Natural killer cell (primary cell): ENCODE measurements at regions of chr11 and their contacts with region 1.

Region 1: DNA sequence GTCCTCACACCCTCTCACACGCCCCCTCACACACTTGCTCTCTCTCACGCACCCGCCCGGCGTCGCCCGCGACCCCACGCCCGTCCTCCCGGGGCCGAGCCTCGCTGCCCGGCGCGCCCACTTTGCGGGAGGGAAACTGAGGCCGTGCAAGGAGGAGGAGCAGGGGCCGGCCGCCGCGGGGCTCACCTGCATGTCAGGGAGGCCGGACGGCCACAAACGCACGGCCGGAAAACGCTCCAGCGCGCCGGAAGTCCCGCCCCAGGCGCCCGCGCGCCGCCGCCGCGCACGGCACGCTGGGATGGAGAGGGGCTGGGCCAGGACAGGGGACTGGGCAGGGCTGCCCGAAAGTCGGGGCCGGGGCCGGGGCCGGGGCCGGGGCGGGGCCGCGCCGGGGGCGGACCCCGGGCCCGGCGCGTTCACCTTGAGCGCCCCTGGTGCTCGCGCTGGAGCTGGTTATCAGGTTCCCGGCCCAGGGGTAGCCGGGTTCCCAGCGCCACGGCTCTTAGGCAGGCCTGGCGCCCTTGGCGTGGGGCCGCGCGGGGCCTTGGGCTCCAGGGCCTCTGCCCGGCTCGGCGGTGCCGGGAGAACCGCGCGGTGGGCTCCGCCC is at the start of gene CHID1:
- DNase-seq: peak; percentile 80 to 86
- ATAC-seq: peak; percentile 93 to 96 (median 95)
- H3K4me3 ChIP-seq: peak within 1 kb of the TSS; percentile 45
- H3K4me3 Mint-ChIP-seq: peak within 1 kb of the TSS; percentile 96
- H3K27ac ChIP-seq: peak within 1 kb of the TSS; percentile 13
- H3K27ac Mint-ChIP-seq: peak within 1 kb of the TSS; percentile 63 to 85
- H3K4me1 ChIP-seq: peaks cover 26% of the 10 kb centered on the region
- H3K4me1 Mint-ChIP-seq: peaks cover 11 to 13% of the 10 kb centered on the region in 2 donors
- H3K27me3 ChIP-seq: no peaks in the 10 kb centered on the region
- H3K27me3 Mint-ChIP-seq: no peaks in the 10 kb centered on the region
- CTCF ChIP-seq: no peak
- total RNA-seq, gene CHID1: 32.6 to 40.3 (median 33.2) TPM

Region 2: GRCh38 chr11:355581-356458 is 554.9 kb before region 1 on chr11:
- intact Hi-C with region 1: no loop called
- DNase-seq: peak; percentile 64 to 93
- ATAC-seq: peak; percentile 19 to 61 (median 58)
- H3K4me3 ChIP-seq: peak overlapping the region; percentile 11
- H3K4me3 Mint-ChIP-seq: peak overlapping the region; percentile 57
- H3K27ac ChIP-seq: peak overlapping the region; percentile 83
- H3K27ac Mint-ChIP-seq: peak overlapping the region; percentile 78
- H3K4me1 ChIP-seq: peaks cover 74% of the 10 kb centered on the region
- H3K4me1 Mint-ChIP-seq: peaks cover 41 to 57% of the 10 kb centered on the region in 2 donors
- H3K27me3 ChIP-seq: no peaks in the 10 kb centered on the region
- H3K27me3 Mint-ChIP-seq: no peaks in the 10 kb centered on the region
- CTCF ChIP-seq: no peak

Region 3: DNA sequence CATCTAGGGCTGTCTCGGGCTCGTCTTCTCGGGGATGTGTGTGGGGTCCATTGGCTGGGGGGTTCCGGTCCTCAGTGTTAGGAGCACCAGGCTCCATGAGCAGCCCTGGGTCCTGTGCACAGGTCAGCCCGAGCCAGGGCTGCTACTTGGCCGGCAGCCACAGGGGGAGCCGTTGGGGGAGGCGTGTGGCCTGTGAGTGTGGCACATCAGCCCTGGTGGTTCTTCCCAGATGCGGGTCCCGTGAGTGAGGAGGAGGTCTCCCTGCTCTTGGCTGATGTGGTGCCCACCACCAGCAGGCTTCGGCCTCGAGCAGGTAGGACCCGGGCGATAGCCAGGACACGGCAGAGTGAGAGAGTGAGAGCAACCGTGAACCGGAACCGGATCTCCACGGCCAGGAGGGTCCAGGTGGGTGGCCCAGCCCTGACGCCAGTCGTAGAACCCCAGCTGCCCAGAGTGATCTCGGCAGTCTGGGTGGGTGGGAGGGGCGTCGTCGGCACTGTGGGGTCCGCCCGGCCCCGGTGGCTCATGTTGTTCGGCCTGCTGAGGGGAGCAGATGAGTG is 313.4 kb before region 1 on chr11:
- intact Hi-C with region 1: no loop called
- DNase-seq: no peak
- ATAC-seq: peak in 2 of 3 donors; percentile 33 to 36
- H3K4me3 ChIP-seq: no peak overlapping the region
- H3K4me3 Mint-ChIP-seq: no peak overlapping the region
- H3K27ac ChIP-seq: no peak overlapping the region
- H3K27ac Mint-ChIP-seq: peak overlapping the region in 1 of 2 donors; percentile 35
- H3K4me1 ChIP-seq: peaks cover 13% of the 10 kb centered on the region
- H3K4me1 Mint-ChIP-seq: peaks cover 10 to 11% of the 10 kb centered on the region in 2 donors
- H3K27me3 ChIP-seq: no peaks in the 10 kb centered on the region
- H3K27me3 Mint-ChIP-seq: no peaks in the 10 kb centered on the region
- CTCF ChIP-seq: no peak

Region 4: DNA sequence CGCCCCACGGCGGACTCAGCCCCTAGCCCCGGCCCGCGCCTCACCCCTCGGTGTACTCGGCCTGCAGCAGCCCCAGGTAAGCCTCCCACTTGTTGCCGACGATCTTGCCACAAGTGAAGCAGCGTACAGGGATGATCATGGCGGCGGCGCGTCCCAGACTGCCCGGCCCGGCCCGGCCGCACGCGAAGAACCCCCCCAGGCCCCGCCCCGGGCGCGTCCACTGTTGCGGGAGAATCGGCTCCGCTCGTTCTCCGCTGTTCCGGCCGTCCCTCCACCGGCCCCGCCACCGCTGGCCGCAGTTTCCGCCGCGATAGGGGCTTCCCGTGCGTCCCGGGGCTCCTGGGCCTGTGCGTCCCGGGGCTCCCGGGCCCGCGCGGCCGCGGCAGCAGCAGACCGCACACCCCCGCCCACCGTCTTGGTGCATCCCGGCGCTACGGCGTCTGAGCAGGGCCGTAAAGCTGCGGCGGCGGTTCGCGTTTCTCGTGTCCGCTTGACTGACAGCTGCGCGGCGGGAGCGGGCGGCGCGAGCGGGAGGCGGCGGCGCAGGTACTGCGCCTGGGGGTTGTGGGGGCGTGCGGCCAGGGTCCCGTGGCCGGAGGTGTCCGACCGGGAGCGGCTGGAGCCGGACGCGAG is 68.2 kb before region 1 on chr11 and contains the starts of genes POLR2L and TSPAN4:
- intact Hi-C with region 1: loop called (anchors 10 kb)
- DNase-seq: peak; percentile 88 to 94
- ATAC-seq: peak; percentile 83 to 89 (median 83)
- H3K4me3 ChIP-seq: peak within 1 kb of the TSS; percentile 70
- H3K4me3 Mint-ChIP-seq: peak within 1 kb of the TSS; percentile 86
- H3K27ac ChIP-seq: peak within 1 kb of the TSS; percentile 58
- H3K27ac Mint-ChIP-seq: peak within 1 kb of the TSS in 1 of 2 donors; percentile 75
- H3K4me1 ChIP-seq: peaks cover 66% of the 10 kb centered on the region
- H3K4me1 Mint-ChIP-seq: peaks cover 4 to 39% of the 10 kb centered on the region in 2 donors
- H3K27me3 ChIP-seq: no peaks in the 10 kb centered on the region
- H3K27me3 Mint-ChIP-seq: no peaks in the 10 kb centered on the region
- CTCF ChIP-seq: no peak
- total RNA-seq, gene POLR2L: 48.2 to 63.8 (median 61.2) TPM
- total RNA-seq, gene TSPAN4: 11.2 to 18.6 (median 14.6) TPM

Region 5: DNA sequence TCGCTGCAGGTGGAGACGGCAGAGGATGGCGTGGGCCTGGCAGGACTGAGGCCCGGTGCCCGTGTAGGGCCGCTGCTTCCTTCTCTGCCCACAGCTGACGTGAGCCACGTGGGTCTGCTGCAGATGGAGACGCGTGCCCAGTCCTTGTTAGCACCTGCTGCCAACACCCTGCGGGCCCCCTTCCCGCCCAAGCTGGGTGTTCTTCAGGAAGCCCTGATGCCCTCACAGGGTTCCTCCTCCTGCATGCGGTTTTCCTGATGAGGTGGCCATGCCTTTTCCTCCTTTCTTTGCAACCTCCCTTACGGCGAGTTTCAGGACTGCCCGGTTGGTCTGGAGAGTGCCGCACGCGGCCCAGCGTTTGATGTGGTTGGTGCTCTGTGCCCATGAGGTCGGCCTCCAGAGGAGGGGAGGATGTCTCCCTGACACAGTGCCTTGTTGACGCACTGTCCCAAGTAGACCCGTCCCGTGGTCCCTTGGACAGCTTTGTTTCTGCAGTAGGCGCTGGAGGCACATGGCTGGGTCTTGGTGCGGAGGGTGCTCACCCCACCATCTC is 59.7 kb after region 1 on chr11:
- intact Hi-C with region 1: no loop called
- DNase-seq: no peak
- ATAC-seq: peak in 1 of 3 donors; percentile 63
- H3K4me3 ChIP-seq: no peak overlapping the region
- H3K4me3 Mint-ChIP-seq: peak overlapping the region; percentile 82
- H3K27ac ChIP-seq: peak overlapping the region; percentile 36
- H3K27ac Mint-ChIP-seq: peak overlapping the region; percentile 56 to 90
- H3K4me1 ChIP-seq: peaks cover 26% of the 10 kb centered on the region
- H3K4me1 Mint-ChIP-seq: peaks cover 43 to 50% of the 10 kb centered on the region in 2 donors
- H3K27me3 ChIP-seq: no peaks in the 10 kb centered on the region
- H3K27me3 Mint-ChIP-seq: no peaks in the 10 kb centered on the region
- CTCF ChIP-seq: no peak